B cell (primary cell): ENCODE measurements at regions of chr20 and their contacts with region 1.

Region 1: DNA sequence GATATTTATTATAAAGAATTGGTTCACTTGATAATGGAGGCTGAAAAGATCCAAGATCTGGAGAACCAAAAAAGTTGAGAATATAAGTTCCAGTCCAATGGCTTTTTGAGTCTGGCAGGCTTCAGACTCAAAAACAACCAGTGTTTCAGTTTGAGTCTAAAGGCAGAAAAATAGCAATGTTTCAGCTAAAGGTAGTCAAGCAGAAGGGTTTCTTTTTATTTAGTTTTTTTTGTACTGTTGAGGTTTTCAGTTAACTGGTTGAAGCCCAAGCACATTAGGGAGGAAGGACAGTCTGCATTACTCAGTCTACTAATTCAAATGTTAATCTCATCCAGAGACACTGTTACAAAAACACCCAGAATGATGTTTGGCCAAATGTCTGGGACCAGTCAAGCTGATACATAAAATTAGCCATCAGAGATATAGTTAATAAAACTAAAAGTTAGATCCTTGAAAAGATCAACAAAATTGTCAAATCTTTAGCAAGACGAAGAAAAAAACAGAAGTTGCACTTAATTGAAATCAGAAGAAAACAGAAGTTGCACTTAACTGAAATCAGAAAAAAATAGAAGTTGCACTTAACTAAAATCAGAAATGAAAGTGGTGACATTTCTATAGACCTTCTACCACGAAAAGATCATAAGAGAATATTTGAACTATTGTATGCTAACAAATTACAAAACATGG is 980.3 kb upstream of the FLRT3 start:
- DNase-seq: peak; percentile 55
- ATAC-seq: peak; percentile 82
- H3K4me3 ChIP-seq: peak overlapping the region in 4 of 5 experiments; percentile 25 to 52 (median 32)
- H3K4me3 Mint-ChIP-seq: peak overlapping the region; percentile 82
- H3K27ac ChIP-seq: peak overlapping the region; percentile 80 to 84
- H3K27ac Mint-ChIP-seq: peak overlapping the region; percentile 95
- H3K4me1 ChIP-seq: peaks cover 29 to 61% of the 10 kb centered on the region in 2 donors
- H3K4me1 Mint-ChIP-seq: peaks cover 62% of the 10 kb centered on the region
- H3K27me3 ChIP-seq: no peaks in the 10 kb centered on the region
- H3K27me3 Mint-ChIP-seq: no peaks in the 10 kb centered on the region
- CTCF ChIP-seq: no peak

Region 2: DNA sequence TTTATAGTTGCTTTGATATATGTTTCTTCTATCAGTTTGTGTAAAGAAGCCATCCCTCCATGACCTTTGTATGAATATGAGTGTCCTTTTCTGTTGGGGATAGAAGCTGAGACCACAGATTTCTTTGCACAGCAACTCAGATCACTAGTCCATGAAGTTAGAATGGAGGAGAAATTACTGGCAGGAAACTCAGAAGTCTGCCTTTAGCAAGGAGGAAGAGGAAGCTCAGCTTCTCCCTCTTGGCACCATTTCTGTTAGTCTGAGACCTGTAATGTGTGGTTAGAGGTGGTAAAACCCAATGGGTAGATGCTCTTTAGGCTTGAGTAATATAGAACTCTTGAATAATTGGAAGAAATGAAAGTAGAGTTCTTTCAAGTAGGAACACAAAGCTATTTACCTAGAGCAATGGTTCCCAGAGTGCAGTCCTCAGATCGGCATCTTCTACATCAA is 15.0 kb after region 1 on chr20:
- CTCF ChIA-PET with region 1: no interaction called
- POLR2A ChIA-PET with region 1: interaction called, 4 read pairs
- intact Hi-C with region 1: loop called (anchors 2 kb)
- DNase-seq: peak; percentile 15
- ATAC-seq: peak; percentile 45
- H3K4me3 ChIP-seq: peak overlapping the region in 4 of 5 experiments; percentile 9 to 43 (median 32)
- H3K4me3 Mint-ChIP-seq: peak overlapping the region; percentile 71
- H3K27ac ChIP-seq: peak overlapping the region; percentile 41 to 77
- H3K27ac Mint-ChIP-seq: peak overlapping the region; percentile 87
- H3K4me1 ChIP-seq: peaks cover 10 to 14% of the 10 kb centered on the region in 2 donors
- H3K4me1 Mint-ChIP-seq: peaks cover 30% of the 10 kb centered on the region
- H3K27me3 ChIP-seq: no peaks in the 10 kb centered on the region
- H3K27me3 Mint-ChIP-seq: no peaks in the 10 kb centered on the region
- CTCF ChIP-seq: no peak

Region 3: DNA sequence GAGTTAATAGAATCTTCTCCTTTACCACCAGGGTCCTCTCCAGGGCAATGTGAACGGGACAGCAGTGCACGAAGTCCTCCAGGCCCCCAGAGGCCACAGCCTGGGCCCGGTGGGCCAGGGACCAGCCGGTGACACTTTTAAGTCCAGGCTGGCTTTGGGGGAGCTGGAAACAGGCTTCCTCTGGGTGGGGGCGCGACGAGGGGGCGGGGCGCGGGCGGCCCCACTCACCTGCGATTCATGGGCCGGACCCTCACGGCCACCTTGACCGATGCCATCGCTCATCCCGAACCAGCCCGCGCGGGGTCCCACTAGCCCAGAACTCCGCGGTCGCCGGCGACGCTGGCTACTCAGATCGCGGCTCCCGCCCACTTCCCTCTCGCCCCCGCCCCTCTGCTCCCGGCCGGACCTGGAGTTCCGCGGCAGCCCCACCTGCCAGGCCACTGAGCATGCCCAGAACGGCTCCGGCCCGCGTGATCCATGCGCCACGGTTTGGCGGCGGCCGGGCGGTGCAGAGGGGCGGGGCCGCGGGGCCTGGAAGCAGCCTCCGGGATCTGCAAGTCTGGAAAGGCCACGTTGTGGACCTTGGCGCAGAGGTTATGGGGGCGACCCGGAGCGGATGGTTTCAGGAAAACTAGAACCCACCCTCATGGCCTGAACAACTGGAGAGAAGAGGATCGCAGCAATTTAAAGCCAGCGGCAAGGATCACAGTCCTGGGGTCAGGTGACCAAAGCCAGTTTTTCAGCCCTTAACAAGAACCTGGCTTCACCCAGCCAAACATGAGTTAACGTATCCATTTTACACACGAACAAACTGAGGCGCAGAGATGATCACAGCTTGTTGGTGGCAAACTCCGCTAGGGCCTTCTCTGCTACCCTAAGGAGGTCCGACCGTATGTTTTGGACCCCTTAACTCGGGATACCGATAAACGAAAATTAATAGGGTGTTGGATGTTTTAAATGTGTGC is 1255.6 kb after region 1 on chr20 and contains the start of gene KIF16B:
- CTCF ChIA-PET with region 1: no interaction called
- POLR2A ChIA-PET with region 1: no interaction called
- intact Hi-C with region 1: loop called (anchors 5 kb)
- DNase-seq: peak; percentile 89
- ATAC-seq: peak; percentile 89
- H3K4me3 ChIP-seq: peak within 1 kb of the TSS; percentile 72 to 86 (median 83)
- H3K4me3 Mint-ChIP-seq: peak within 1 kb of the TSS; percentile 92
- H3K27ac ChIP-seq: peak within 1 kb of the TSS; percentile 38 to 60
- H3K27ac Mint-ChIP-seq: peak within 1 kb of the TSS; percentile 84
- H3K4me1 ChIP-seq: peaks cover 22 to 28% of the 10 kb centered on the region in 2 donors
- H3K4me1 Mint-ChIP-seq: peaks cover 42% of the 10 kb centered on the region
- H3K27me3 ChIP-seq: no peaks in the 10 kb centered on the region
- H3K27me3 Mint-ChIP-seq: no peaks in the 10 kb centered on the region
- CTCF ChIP-seq: no peak
- total RNA-seq, gene KIF16B: 12.4 and 13.0 TPM in 2 replicates